Posterior vena cava (tissue), 2 donors: ENCODE measurements at regions of chr1 and their contacts with region 1.

Region 1: DNA sequence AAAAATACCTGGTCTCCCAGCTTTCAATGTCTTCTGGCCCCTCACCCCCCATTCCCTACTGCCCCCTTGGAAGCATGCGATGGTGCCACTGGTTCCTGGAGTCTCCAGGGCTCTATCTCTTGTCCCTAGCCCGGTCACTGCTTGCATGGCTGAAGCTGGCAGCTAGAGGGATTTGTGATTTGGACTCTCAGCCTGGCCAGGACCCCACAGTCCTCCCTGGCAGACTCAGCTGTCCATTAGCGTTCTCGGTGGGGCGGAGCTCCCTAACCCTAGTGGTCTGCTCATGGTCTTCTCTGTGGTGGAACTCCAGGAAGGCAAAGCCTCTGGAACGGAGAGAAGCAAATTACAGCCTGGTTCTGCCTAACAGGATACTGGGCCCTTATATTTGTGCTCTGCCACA is 74.3 kb downstream of the OLFML3 start:
- DNase-seq: no peak

Region 2: DNA sequence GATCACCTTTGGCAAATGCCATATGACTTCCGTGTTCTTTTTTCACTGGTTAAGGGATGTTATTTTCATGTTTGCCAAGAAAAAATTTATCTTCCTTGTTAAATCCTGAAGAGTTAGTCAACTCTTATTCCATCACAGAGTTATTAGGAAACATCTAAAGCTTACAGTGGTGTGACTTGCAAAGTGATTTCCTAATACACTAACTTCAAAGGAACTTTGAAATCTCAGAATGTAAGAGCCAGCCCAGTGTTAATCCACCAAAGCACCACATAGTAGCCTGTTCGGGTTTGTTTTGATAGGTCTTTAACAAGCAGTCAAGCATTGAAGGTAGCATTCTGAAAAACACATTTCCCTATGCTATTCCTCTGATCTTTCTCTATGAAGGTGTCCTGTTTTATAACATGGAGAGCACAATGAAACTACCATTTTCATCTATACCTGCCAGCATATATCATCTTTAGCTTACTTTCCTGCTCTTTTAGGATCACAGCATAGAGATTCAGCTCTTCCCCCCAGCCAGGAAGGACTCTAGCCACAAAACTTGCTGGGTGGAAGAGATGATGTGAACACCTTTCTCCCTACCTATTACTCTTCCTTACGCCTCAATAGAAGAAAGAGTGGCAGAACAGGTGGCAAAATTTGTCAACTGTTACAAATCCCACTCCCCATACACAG is 745.7 kb before region 1 on chr1:
- intact Hi-C with region 1: no loop called
- DNase-seq: no peak

Region 3: DNA sequence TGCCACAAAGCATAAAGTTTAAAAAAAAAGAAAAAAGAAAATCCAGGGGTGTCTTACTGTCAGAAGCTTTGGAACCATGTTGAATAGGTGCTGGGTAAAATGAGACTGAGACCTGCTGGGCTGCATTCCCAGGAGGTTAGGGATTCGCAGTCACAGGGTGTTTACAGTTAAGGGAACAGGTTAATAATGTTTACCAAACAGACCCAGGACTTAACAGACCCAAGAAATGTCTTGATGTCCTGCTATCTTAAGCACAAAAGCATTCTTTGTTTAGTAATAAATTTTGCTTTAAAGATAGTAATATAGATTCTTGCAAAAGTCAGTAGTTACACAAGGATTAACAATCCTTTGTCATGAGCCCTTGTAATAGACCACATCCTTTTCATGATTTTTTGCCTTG is 19.6 kb before region 1 on chr1:
- intact Hi-C with region 1: loop called in 1 of 2 experiments (anchors 1 kb)
- DNase-seq: no peak

Region 4: GRCh38 chr1:114081437-114082303 is 28.1 kb after region 1 on chr1:
- intact Hi-C with region 1: no loop called
- DNase-seq: peak; percentile 83